ENCODE measurements at regions of chr6 and their contacts with region 1.

Region 1: GRCh38 chr6:27809939-27810767 is 102.0 kb downstream of the OR2B2 start:
- DNase-seq: peak; percentile 89
- H3K4me3 Mint-ChIP-seq: peak overlapping the region; percentile 86
- H3K27ac Mint-ChIP-seq: peak overlapping the region; percentile 99
- H3K4me1 Mint-ChIP-seq: peaks cover 65% of the 10 kb centered on the region
- H3K27me3 Mint-ChIP-seq: no peaks in the 10 kb centered on the region

Region 2: DNA sequence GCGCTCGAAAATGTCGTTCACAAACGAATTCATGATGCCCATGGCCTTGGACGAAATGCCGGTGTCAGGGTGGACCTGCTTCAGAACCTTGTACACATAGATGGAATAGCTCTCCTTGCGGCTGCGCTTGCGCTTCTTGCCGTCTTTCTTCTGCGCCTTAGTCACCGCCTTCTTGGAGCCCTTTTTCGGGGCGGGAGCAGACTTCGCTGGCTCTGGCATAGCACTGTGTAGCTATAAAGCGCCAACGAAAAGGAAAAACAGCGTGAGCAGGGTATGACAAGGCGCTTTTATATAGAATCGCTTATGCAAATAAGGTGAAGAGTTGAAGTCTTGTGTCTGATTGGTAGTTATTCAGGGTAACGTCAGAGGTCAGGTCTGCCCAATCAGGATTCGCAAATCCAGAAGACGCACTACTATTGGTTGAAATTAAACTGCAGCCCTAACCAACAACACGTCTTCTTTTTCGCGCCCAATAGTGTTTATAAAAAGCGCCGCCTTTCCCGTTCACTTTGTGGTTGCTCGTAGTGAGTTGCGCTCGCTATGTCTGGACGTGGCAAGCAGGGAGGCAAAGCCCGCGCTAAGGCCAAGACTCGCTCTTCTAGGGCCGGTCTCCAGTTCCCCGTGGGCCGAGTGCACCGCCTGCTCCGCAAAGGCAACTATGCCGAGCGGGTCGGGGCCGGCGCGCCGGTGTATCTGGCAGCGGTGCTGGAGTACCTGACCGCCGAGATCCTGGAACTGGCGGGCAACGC is 677.4 kb before region 1 on chr6:
- CTCF ChIA-PET with region 1: no interaction called
- POLR2A ChIA-PET with region 1: interaction called, 64 read pairs
- DNase-seq: peak; percentile 94
- H3K4me3 Mint-ChIP-seq: no peak overlapping the region
- H3K27ac Mint-ChIP-seq: no peak overlapping the region
- H3K4me1 Mint-ChIP-seq: peaks cover 66% of the 10 kb centered on the region
- H3K27me3 Mint-ChIP-seq: no peaks in the 10 kb centered on the region

Region 3: GRCh38 chr6:27146706-27147505 is 663.2 kb before region 1 on chr6:
- CTCF ChIA-PET with region 1: interaction called, 4 read pairs
- POLR2A ChIA-PET with region 1: interaction called, 49 read pairs
- DNase-seq: peak; percentile 88
- H3K4me3 Mint-ChIP-seq: no peak overlapping the region
- H3K27ac Mint-ChIP-seq: no peak overlapping the region
- H3K4me1 Mint-ChIP-seq: peaks cover 24% of the 10 kb centered on the region
- H3K27me3 Mint-ChIP-seq: no peaks in the 10 kb centered on the region

Region 4: GRCh38 chr6:27825025-27825793 is 15.1 kb after region 1 on chr6:
- CTCF ChIA-PET with region 1: interaction called, 5 read pairs
- POLR2A ChIA-PET with region 1: interaction called, 13 read pairs
- DNase-seq: no peak
- H3K4me3 Mint-ChIP-seq: peak overlapping the region; percentile 89
- H3K27ac Mint-ChIP-seq: peak overlapping the region; percentile 99
- H3K4me1 Mint-ChIP-seq: peaks cover 48% of the 10 kb centered on the region
- H3K27me3 Mint-ChIP-seq: no peaks in the 10 kb centered on the region

Region 5: GRCh38 chr6:27864906-27865849 is 55.0 kb after region 1 on chr6:
- CTCF ChIA-PET with region 1: interaction called, 3 read pairs
- POLR2A ChIA-PET with region 1: interaction called, 172 read pairs
- DNase-seq: peak; percentile 88
- H3K4me3 Mint-ChIP-seq: peak overlapping the region; percentile 99
- H3K27ac Mint-ChIP-seq: peak overlapping the region; percentile 100
- H3K4me1 Mint-ChIP-seq: peaks cover 65% of the 10 kb centered on the region
- H3K27me3 Mint-ChIP-seq: no peaks in the 10 kb centered on the region

Measured in activated CD4-positive, alpha-beta T cell treated with anti-CD3 and anti-CD28 coated beads, Interleukin-2, amount 10 ng/mL, durations not matched to agents 7 days and 5 days (primary cell).